Mammary epithelial cell (primary cell): ENCODE measurements at regions of chr12 and their contacts with region 1.

Region 1: GRCh38 chr12:54207484-54208294 is 18.9 kb upstream of the SMUG1 start:
- DNase-seq: peak; percentile 81
- H3K4me3 ChIP-seq: no peak overlapping the region
- H3K27ac ChIP-seq: no peak overlapping the region
- H3K4me1 ChIP-seq: peaks cover 13% of the 10 kb centered on the region
- H3K27me3 ChIP-seq: no peaks in the 10 kb centered on the region
- CTCF ChIP-seq: peak; percentile 97 to 99

Region 2: GRCh38 chr12:54134850-54135249 is 72.8 kb before region 1 on chr12:
- CTCF ChIA-PET with region 1: no interaction called
- dilution Hi-C with region 1: loop called (anchors 10 kb)
- in situ Hi-C with region 1: no loop called
- intact Hi-C with region 1: no loop called
- DNase-seq: no peak
- H3K4me3 ChIP-seq: no peak overlapping the region
- H3K27ac ChIP-seq: no peak overlapping the region
- H3K4me1 ChIP-seq: no peaks in the 10 kb centered on the region
- H3K27me3 ChIP-seq: no peaks in the 10 kb centered on the region
- CTCF ChIP-seq: peak in 1 of 2 donors; percentile 19